Dorsolateral prefrontal cortex (tissue), 120 donors: ENCODE measurements at regions of chr12 and their contacts with region 1.

Region 1: GRCh38 chr12:95117178-95117599 is 43.8 kb upstream of the NR2C1 start:
- DNase-seq: peak in 4 of 10 donors; percentile 41 to 76 (median 60)
- H3K4me3 ChIP-seq: no peak overlapping the region
- H3K27ac ChIP-seq: no peak overlapping the region
- H3K27me3 ChIP-seq: no peaks in the 10 kb centered on the region
- CTCF ChIP-seq: peak; percentile 69 to 92 (median 84)

Region 2: GRCh38 chr12:94922561-94922960 is 194.6 kb before region 1 on chr12:
- intact Hi-C with region 1: no loop called
- DNase-seq: no peak
- H3K4me3 ChIP-seq: no peak overlapping the region
- H3K27ac ChIP-seq: no peak overlapping the region
- H3K27me3 ChIP-seq: no peaks in the 10 kb centered on the region
- CTCF ChIP-seq: no peak

Region 3: DNA sequence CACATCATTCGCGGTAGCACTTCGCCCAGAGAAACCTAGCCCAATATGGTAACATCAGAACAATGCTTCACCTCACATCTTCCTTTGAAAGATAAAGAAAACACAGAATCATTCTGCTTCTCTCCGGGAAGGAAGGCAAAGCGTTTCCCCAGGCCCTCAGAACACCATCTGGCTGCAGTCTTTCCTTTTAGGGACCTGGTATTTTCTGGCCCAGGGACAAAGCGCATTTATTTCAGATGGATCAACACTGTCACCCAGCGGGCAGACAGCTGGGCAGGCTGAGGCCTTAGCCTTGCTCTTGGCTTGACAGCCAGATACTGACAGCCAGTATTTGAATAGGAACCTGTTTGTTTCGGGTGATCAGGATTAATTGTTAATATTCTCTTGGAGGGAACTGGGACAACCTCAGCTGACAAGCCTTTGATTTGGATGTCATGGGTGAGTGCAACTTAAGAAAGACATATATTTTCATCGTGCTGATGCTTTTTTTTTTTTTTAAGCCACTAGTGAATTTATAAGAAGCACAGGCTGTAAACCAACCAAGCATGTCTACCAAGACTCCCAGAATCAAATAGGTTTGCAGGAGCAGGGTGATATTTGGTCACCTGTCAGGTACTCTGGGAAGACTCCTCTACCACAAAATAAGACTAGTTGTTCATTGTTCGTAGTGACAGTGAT is 219.3 kb after region 1 on chr12:
- intact Hi-C with region 1: loop called (anchors 2 to 5 kb)
- DNase-seq: peak; percentile 47 to 89 (median 75)
- H3K4me3 ChIP-seq: peak overlapping the region in 41 of 59 donors; percentile 4 to 55 (median 26)
- H3K27ac ChIP-seq: peak overlapping the region in 53 of 59 donors; percentile 2 to 87 (median 47)
- H3K27me3 ChIP-seq: no peaks in the 10 kb centered on the region
- CTCF ChIP-seq: peak; percentile 59 to 95 (median 82)

Region 4: DNA sequence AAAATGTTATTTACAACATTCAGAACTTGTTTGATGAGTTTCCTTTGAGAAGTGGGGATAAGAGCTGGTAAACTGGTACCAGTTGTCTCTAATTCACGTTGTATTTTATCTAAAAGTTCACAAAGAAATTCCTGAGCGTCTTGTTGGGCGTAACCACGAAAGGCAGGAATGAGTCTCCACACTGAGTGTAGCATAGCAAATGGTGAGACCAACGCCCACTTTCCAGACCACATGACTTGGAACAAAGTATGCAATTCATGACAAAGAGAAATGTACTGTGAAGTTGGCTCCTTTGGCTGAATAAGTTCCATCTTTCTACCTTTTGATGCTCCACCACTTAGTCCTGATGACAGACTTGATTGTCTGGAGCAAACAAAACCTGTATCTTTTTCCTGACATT is 415.7 kb after region 1 on chr12:
- intact Hi-C with region 1: loop called (anchors 5 to 10 kb)
- DNase-seq: no peak
- H3K4me3 ChIP-seq: no peak overlapping the region
- H3K27ac ChIP-seq: no peak overlapping the region
- H3K27me3 ChIP-seq: no peaks in the 10 kb centered on the region
- CTCF ChIP-seq: no peak

Region 5: DNA sequence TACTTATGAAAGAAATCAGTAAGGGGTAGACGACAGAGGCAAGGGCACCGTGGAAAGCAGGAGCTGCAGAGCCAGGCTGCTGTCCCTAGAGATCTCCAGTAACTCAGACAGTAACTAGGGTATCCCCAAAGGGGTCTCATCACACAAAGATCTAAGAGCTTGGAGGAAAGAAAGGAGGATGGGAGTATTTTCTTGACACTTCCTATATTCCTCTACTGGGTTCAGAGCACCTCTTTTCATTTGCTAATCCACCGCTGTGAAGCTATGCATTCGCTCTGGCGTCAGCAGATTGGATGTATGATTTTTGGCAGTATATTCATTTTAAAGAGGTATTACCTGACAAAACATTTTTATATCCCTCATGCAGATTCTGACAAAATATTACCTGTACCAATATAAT is 421.5 kb after region 1 on chr12:
- intact Hi-C with region 1: loop called (anchors 5 to 10 kb)
- DNase-seq: no peak
- H3K4me3 ChIP-seq: peak overlapping the region in 4 of 59 donors; percentile 5 to 30 (median 10)
- H3K27ac ChIP-seq: no peak overlapping the region
- H3K27me3 ChIP-seq: no peaks in the 10 kb centered on the region
- CTCF ChIP-seq: no peak